Panc1 (cell line): ENCODE measurements at regions of chr2 and their contacts with region 1.

Region 1: DNA sequence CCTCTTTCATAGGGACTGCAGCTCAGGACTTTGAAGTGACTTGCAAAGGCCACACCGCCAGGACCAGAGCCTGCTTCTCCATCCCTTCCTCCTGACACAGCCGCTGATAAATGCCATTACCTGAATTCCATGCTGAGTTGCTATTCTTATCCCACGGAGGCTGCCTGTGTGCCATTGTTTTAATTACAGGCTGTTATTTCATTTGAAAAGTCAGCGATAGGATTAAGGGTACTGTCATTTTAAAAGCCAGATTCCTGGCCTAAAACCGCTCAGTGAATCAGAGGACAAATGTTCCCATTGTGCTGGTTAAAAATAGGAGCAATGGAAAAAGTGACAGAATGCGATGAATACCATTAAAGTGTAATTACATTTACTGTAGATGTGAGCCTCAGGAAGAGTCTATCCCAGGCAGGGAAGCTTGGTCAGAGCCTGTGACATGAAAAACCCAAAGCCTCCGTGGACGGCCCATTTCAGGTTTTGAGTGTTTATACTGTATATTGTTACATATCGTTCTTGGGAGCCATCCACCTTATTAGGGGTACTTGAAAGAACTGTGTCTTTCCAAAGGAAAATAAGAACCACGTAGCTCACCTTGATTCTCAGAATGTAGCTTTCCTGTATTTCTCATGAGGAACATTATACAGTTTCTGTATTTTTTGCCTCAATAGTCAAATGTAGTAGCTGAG is 41.3 kb downstream of the PDCL3 start:
- DNase-seq: no peak
- ATAC-seq: no peak
- H3K4me3 ChIP-seq: no peak overlapping the region
- H3K27ac ChIP-seq: no peak overlapping the region
- H3K4me1 ChIP-seq: peaks cover 7% of the 10 kb centered on the region
- H3K27me3 ChIP-seq: no peaks in the 10 kb centered on the region
- CTCF ChIP-seq: no peak

Region 2: GRCh38 chr2:100407108-100407507 is 197.0 kb before region 1 on chr2:
- CTCF ChIA-PET with region 1: no interaction called
- POLR2A ChIA-PET with region 1: no interaction called
- in situ Hi-C with region 1: no loop called
- intact Hi-C with region 1: no loop called
- DNase-seq: no peak
- ATAC-seq: no peak
- H3K4me3 ChIP-seq: no peak overlapping the region
- H3K27ac ChIP-seq: no peak overlapping the region
- H3K4me1 ChIP-seq: no peaks in the 10 kb centered on the region
- H3K27me3 ChIP-seq: no peaks in the 10 kb centered on the region
- CTCF ChIP-seq: no peak

Region 3: DNA sequence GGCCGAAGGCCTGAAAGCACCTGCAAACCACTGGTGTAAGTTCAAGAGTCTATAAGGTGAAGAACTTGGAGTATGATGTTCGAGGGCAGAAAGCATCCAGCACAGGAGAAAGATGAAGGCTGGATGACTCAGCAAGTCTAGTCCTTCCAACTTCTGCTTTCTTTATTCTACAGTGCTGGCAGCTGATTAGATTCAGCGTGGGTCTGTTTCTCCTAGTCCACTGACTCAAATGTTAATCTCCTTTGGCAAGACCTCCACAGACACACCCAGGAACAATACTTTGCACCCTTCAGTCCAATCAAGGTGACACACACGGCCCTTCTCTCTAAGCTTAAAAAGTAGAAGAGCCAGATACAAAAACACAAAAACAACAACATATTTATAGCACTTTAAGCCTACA is 90.4 kb before region 1 on chr2:
- CTCF ChIA-PET with region 1: no interaction called
- POLR2A ChIA-PET with region 1: no interaction called
- in situ Hi-C with region 1: no loop called
- intact Hi-C with region 1: no loop called
- DNase-seq: no peak
- ATAC-seq: no peak
- H3K4me3 ChIP-seq: no peak overlapping the region
- H3K27ac ChIP-seq: no peak overlapping the region
- H3K4me1 ChIP-seq: no peaks in the 10 kb centered on the region
- H3K27me3 ChIP-seq: no peaks in the 10 kb centered on the region; the same call in 1 of the 2 replicates
- CTCF ChIP-seq: no peak

Region 4: GRCh38 chr2:100524331-100524730 is 79.8 kb before region 1 on chr2:
- CTCF ChIA-PET with region 1: no interaction called
- POLR2A ChIA-PET with region 1: no interaction called
- in situ Hi-C with region 1: no loop called
- intact Hi-C with region 1: no loop called
- DNase-seq: no peak
- ATAC-seq: no peak
- H3K4me3 ChIP-seq: no peak overlapping the region
- H3K27ac ChIP-seq: no peak overlapping the region
- H3K4me1 ChIP-seq: no peaks in the 10 kb centered on the region
- H3K27me3 ChIP-seq: no peaks in the 10 kb centered on the region
- CTCF ChIP-seq: no peak

Region 5: DNA sequence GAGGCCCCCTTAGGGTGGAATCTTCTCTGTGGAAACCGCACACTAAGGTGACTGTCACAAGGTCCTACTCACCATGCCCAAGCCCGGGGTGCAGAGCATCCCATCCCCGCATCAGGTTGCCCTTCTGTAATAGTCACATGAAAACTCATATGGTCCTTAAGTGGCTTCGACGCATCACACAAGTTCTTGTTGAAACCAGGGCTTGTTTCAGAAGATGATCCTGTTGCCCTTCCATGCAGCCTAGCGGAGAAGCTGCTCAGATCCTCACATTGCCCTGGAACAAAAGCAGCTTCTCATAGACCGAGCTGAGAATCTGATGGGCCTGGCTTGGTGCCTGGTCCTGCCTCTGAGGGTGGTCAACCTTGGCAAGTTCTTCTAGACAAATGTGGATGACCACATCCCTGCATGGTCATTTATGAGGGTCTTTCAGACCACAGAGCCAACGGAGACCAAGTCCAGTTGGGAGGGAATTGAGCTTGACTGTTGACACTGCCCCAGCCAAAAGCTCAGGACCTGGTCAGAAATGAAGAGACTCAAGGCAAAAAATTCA is 12.8 kb after region 1 on chr2:
- CTCF ChIA-PET with region 1: interaction called, 11 read pairs
- POLR2A ChIA-PET with region 1: no interaction called
- in situ Hi-C with region 1: no loop called
- intact Hi-C with region 1: no loop called
- DNase-seq: no peak
- ATAC-seq: no peak
- H3K4me3 ChIP-seq: no peak overlapping the region
- H3K27ac ChIP-seq: no peak overlapping the region
- H3K4me1 ChIP-seq: no peaks in the 10 kb centered on the region
- H3K27me3 ChIP-seq: no peaks in the 10 kb centered on the region
- CTCF ChIP-seq: no peak

Region 6: GRCh38 chr2:100673691-100674485 is 69.8 kb after region 1 on chr2:
- CTCF ChIA-PET with region 1: no interaction called
- POLR2A ChIA-PET with region 1: no interaction called
- in situ Hi-C with region 1: no loop called
- intact Hi-C with region 1: no loop called
- DNase-seq: no peak
- ATAC-seq: no peak
- H3K4me3 ChIP-seq: no peak overlapping the region
- H3K27ac ChIP-seq: no peak overlapping the region
- H3K4me1 ChIP-seq: no peaks in the 10 kb centered on the region
- H3K27me3 ChIP-seq: no peaks in the 10 kb centered on the region
- CTCF ChIP-seq: no peak